Activated CD8-positive, alpha-beta T cell treated with anti-CD3 and anti-CD28 coated beads for 36 hours (primary cell): ENCODE measurements at regions of chr11 and their contacts with region 1.

Region 1: GRCh38 chr11:11028017-11028692 is 170.3 kb upstream of the ZBED5 start:
- DNase-seq: peak; percentile 85
- ATAC-seq: peak; percentile 93
- H3K4me3 Mint-ChIP-seq: no peak overlapping the region
- H3K27ac Mint-ChIP-seq: no peak overlapping the region
- H3K4me1 Mint-ChIP-seq: no peaks in the 10 kb centered on the region
- H3K27me3 Mint-ChIP-seq: no peaks in the 10 kb centered on the region
- CTCF ChIP-seq: peak; percentile 89

Region 2: GRCh38 chr11:10925144-10925926 is 102.8 kb before region 1 on chr11:
- CTCF ChIA-PET with region 1: interaction called, 27 read pairs
- POLR2A ChIA-PET with region 1: interaction called, 3 read pairs
- intact Hi-C with region 1: no loop called
- DNase-seq: no peak
- ATAC-seq: no peak
- H3K4me3 Mint-ChIP-seq: no peak overlapping the region
- H3K27ac Mint-ChIP-seq: no peak overlapping the region
- H3K4me1 Mint-ChIP-seq: peaks cover 2% of the 10 kb centered on the region
- H3K27me3 Mint-ChIP-seq: peaks cover 15% of the 10 kb centered on the region
- CTCF ChIP-seq: no peak

Region 3: GRCh38 chr11:10943968-10944367 is 84.2 kb before region 1 on chr11:
- CTCF ChIA-PET with region 1: interaction called, 13 read pairs
- POLR2A ChIA-PET with region 1: no interaction called
- intact Hi-C with region 1: no loop called
- DNase-seq: no peak
- ATAC-seq: no peak
- H3K4me3 Mint-ChIP-seq: no peak overlapping the region
- H3K27ac Mint-ChIP-seq: no peak overlapping the region
- H3K4me1 Mint-ChIP-seq: peaks cover 3% of the 10 kb centered on the region
- H3K27me3 Mint-ChIP-seq: no peaks in the 10 kb centered on the region
- CTCF ChIP-seq: no peak

Region 4: DNA sequence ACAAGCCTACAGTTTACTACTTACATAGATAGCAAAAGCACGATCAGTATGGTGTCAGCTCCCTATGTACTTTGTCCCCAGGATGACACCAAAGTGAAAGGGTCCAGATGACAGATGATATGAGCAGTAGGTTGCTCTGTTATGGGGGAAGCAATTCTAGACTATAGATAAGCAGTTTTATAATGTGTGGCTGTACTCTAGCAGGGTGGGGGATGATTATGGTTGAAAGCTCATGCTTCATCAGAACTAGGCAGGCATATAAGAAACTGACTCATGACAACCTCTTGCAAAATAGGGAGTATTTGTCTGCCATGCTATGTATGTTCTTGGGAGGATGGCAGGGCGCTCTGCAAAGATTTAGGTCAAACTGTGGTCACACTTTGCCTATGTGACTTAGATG is 12.1 kb before region 1 on chr11:
- CTCF ChIA-PET with region 1: interaction called, 16 read pairs
- POLR2A ChIA-PET with region 1: no interaction called
- intact Hi-C with region 1: no loop called
- DNase-seq: no peak
- ATAC-seq: no peak
- H3K4me3 Mint-ChIP-seq: no peak overlapping the region
- H3K27ac Mint-ChIP-seq: no peak overlapping the region
- H3K4me1 Mint-ChIP-seq: no peaks in the 10 kb centered on the region
- H3K27me3 Mint-ChIP-seq: peaks cover 6% of the 10 kb centered on the region
- CTCF ChIP-seq: no peak

Region 5: DNA sequence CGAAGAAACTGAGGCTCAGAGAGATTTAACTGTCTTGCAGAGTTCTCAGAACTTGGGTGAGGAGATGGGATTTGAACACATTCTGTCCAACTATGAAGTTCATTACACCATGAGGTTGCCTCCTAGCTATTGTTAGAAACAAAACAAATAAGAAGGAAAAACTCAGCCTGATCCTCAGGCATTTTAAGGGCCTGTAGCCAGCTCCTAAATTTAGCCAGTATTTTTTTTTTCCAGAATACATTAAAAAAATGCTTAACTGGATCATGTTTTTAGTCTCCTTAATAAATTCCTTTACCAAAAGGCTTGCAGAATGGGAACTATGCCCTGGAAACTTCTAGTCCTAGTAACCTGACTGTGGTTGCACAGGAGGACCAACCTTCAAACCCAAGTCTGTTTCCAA is 112.9 kb after region 1 on chr11:
- CTCF ChIA-PET with region 1: interaction called, 11 read pairs
- POLR2A ChIA-PET with region 1: no interaction called
- intact Hi-C with region 1: no loop called
- DNase-seq: no peak
- ATAC-seq: no peak
- H3K4me3 Mint-ChIP-seq: no peak overlapping the region
- H3K27ac Mint-ChIP-seq: no peak overlapping the region
- H3K4me1 Mint-ChIP-seq: peaks cover 14% of the 10 kb centered on the region
- H3K27me3 Mint-ChIP-seq: no peaks in the 10 kb centered on the region
- CTCF ChIP-seq: no peak

Region 6: DNA sequence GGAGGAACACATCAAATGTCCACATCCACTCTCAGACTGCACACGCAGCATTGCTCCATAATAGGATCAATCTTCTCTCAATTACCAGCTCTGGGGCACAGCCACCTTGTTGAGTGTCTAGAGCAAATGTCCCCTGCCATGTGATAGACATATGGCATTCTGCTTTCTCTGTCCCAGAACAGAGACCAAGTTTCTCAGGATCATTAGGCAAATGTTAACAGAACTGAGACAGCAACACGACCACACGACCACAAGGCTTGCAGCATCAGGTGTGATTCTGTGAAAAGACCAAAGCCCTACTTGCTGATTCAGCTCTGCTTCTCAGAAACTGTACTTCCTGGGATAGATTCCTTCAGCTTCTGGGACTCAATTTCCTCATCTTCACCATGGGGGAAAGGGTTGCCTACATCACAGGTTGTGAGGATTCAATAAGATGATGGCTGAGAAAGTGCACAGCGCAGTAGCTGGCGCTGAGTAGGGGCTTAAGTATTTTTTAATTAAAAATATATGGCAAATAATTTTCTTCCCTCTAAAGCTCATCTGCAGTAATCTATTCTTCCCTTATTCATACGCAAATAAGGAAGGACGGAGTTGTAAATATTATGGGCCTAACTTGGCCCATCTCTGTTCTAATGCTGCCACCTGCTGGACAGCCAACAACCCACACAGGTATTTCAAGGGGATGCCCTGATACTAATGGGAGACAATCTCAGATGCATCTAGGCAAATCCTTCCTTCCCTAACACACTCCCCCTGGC is 759.3 kb after region 1 on chr11:
- CTCF ChIA-PET with region 1: interaction called, 63 read pairs
- POLR2A ChIA-PET with region 1: no interaction called
- intact Hi-C with region 1: loop called (anchors 5 kb)
- DNase-seq: peak; percentile 76
- ATAC-seq: peak; percentile 82
- H3K4me3 Mint-ChIP-seq: no peak overlapping the region
- H3K27ac Mint-ChIP-seq: no peak overlapping the region
- H3K4me1 Mint-ChIP-seq: no peaks in the 10 kb centered on the region
- H3K27me3 Mint-ChIP-seq: no peaks in the 10 kb centered on the region
- CTCF ChIP-seq: peak; percentile 92